Activated B cell treated with CpG ODN at 0.5 μM for 24 hours (primary cell): ENCODE measurements at regions of chr19 and their contacts with region 1.

Region 1: GRCh38 chr19:41353466-41354342 is at the start of gene TGFB1:
- DNase-seq: peak; percentile 92
- ATAC-seq: peak; percentile 70
- H3K4me3 Mint-ChIP-seq: peak within 1 kb of the TSS; percentile 100
- H3K27ac Mint-ChIP-seq: peak within 1 kb of the TSS; percentile 96
- H3K4me1 Mint-ChIP-seq: peaks cover 44% of the 10 kb centered on the region
- H3K27me3 Mint-ChIP-seq: no peaks in the 10 kb centered on the region
- CTCF ChIP-seq: peak; percentile 66
- total RNA-seq, gene TGFB1: 80.7 and 88.5 TPM in 2 replicates

Region 2: GRCh38 chr19:41206926-41207750 is 146.6 kb before region 1 on chr19:
- CTCF ChIA-PET with region 1: interaction called, 5 read pairs
- POLR2A ChIA-PET with region 1: interaction called, 8 read pairs
- intact Hi-C with region 1: loop called (anchors 1 kb)
- DNase-seq: no peak
- ATAC-seq: no peak
- H3K4me3 Mint-ChIP-seq: no peak overlapping the region
- H3K27ac Mint-ChIP-seq: no peak overlapping the region
- H3K4me1 Mint-ChIP-seq: no peaks in the 10 kb centered on the region
- H3K27me3 Mint-ChIP-seq: peaks cover 3% of the 10 kb centered on the region
- CTCF ChIP-seq: no peak

Region 3: GRCh38 chr19:41288673-41289505 is 64.8 kb before region 1 on chr19:
- CTCF ChIA-PET with region 1: no interaction called
- POLR2A ChIA-PET with region 1: no interaction called
- intact Hi-C with region 1: no loop called
- DNase-seq: no peak
- ATAC-seq: no peak
- H3K4me3 Mint-ChIP-seq: no peak overlapping the region
- H3K27ac Mint-ChIP-seq: no peak overlapping the region
- H3K4me1 Mint-ChIP-seq: no peaks in the 10 kb centered on the region
- H3K27me3 Mint-ChIP-seq: no peaks in the 10 kb centered on the region
- CTCF ChIP-seq: no peak

Region 4: DNA sequence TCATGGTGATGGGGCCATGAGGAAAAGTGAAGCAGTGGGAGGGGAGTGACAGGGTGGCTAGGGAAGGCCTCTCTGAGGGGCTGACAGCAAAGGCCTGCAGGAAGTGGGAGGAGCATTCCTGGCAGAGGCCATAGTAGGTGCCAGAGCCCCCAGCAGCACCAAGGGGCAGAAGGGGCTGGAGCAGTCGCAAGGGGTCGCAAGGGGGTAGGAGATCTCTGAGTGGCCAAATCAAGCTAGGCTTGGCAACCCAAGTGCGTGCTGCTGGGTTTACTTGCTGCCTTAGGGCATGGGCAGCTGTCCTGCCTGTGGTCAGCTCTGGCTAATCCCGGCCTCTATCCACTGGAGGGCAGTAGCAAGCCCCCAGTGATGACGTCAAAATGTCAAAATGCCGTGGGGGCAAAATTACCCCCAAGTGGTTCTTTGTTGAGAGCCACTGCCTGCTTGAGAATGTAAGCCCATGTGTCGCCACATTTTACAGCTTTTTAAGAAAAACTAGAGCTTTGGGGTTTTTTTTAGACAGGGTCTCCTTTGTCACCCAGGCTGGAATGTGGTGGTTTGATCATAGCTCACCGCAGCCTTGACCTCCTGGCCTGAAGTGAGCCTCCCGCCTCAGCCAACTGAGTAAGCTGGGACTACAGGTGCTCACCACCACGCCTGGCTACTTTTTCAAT is 32.0 kb before region 1 on chr19:
- CTCF ChIA-PET with region 1: interaction called, 18 read pairs
- POLR2A ChIA-PET with region 1: interaction called, 119 read pairs
- intact Hi-C with region 1: no loop called
- DNase-seq: no peak
- ATAC-seq: no peak
- H3K4me3 Mint-ChIP-seq: no peak overlapping the region
- H3K27ac Mint-ChIP-seq: peak overlapping the region; percentile 37
- H3K4me1 Mint-ChIP-seq: peaks cover 55% of the 10 kb centered on the region
- H3K27me3 Mint-ChIP-seq: no peaks in the 10 kb centered on the region
- CTCF ChIP-seq: no peak

Region 5: GRCh38 chr19:41334793-41335192 is 18.9 kb before region 1 on chr19:
- CTCF ChIA-PET with region 1: interaction called, 4 read pairs
- POLR2A ChIA-PET with region 1: interaction called, 31 read pairs
- intact Hi-C with region 1: loop called (anchors 1 kb)
- DNase-seq: no peak
- ATAC-seq: peak; percentile 69
- H3K4me3 Mint-ChIP-seq: peak overlapping the region; percentile 50
- H3K27ac Mint-ChIP-seq: peak overlapping the region; percentile 73
- H3K4me1 Mint-ChIP-seq: peaks cover 38% of the 10 kb centered on the region
- H3K27me3 Mint-ChIP-seq: no peaks in the 10 kb centered on the region
- CTCF ChIP-seq: no peak

Region 6: GRCh38 chr19:41363753-41364523 is 10.2 kb after region 1 on chr19 and contains the start of gene B9D2:
- CTCF ChIA-PET with region 1: interaction called, 38 read pairs
- POLR2A ChIA-PET with region 1: interaction called, 106 read pairs
- intact Hi-C with region 1: loop called (anchors 1 kb)
- DNase-seq: peak; percentile 93
- ATAC-seq: peak; percentile 92
- H3K4me3 Mint-ChIP-seq: peak within 1 kb of the TSS; percentile 96
- H3K27ac Mint-ChIP-seq: peak within 1 kb of the TSS; percentile 100
- H3K4me1 Mint-ChIP-seq: peaks cover 34% of the 10 kb centered on the region
- H3K27me3 Mint-ChIP-seq: no peaks in the 10 kb centered on the region
- CTCF ChIP-seq: no peak
- total RNA-seq, gene B9D2: 11.7 and 14.2 TPM in 2 replicates

Region 7: GRCh38 chr19:41439441-41440222 is 85.9 kb after region 1 on chr19 and contains the start of gene DMAC2:
- CTCF ChIA-PET with region 1: interaction called, 3 read pairs
- POLR2A ChIA-PET with region 1: interaction called, 13 read pairs
- intact Hi-C with region 1: loop called (anchors 5 kb)
- DNase-seq: peak; percentile 78
- ATAC-seq: peak; percentile 97
- H3K4me3 Mint-ChIP-seq: no peak within 1 kb of the TSS
- H3K27ac Mint-ChIP-seq: no peak within 1 kb of the TSS
- H3K4me1 Mint-ChIP-seq: peaks cover 7% of the 10 kb centered on the region
- H3K27me3 Mint-ChIP-seq: no peaks in the 10 kb centered on the region
- CTCF ChIP-seq: no peak
- total RNA-seq, gene DMAC2: 38.2 and 45.7 TPM in 2 replicates

Region 8: GRCh38 chr19:41978470-41978869 is 624.8 kb after region 1 on chr19:
- CTCF ChIA-PET with region 1: no interaction called
- POLR2A ChIA-PET with region 1: no interaction called
- intact Hi-C with region 1: no loop called
- DNase-seq: no peak
- ATAC-seq: no peak
- H3K4me3 Mint-ChIP-seq: no peak overlapping the region
- H3K27ac Mint-ChIP-seq: no peak overlapping the region
- H3K4me1 Mint-ChIP-seq: no peaks in the 10 kb centered on the region
- H3K27me3 Mint-ChIP-seq: no peaks in the 10 kb centered on the region
- CTCF ChIP-seq: no peak